Activated T-helper 2 cell treated with anti-CD3 and anti-CD28 coated beads, Interferon-gamma antibody, Interleukin-2, Interleukin-4, amounts not matched to agents 10 μg/mL and 5 μg/mL and 100 μg/mL, durations not matched to agents 14 hours and 24 hours and 36 hours (primary cell): ENCODE measurements at regions of chr12 and their contacts with region 1.

Region 1: DNA sequence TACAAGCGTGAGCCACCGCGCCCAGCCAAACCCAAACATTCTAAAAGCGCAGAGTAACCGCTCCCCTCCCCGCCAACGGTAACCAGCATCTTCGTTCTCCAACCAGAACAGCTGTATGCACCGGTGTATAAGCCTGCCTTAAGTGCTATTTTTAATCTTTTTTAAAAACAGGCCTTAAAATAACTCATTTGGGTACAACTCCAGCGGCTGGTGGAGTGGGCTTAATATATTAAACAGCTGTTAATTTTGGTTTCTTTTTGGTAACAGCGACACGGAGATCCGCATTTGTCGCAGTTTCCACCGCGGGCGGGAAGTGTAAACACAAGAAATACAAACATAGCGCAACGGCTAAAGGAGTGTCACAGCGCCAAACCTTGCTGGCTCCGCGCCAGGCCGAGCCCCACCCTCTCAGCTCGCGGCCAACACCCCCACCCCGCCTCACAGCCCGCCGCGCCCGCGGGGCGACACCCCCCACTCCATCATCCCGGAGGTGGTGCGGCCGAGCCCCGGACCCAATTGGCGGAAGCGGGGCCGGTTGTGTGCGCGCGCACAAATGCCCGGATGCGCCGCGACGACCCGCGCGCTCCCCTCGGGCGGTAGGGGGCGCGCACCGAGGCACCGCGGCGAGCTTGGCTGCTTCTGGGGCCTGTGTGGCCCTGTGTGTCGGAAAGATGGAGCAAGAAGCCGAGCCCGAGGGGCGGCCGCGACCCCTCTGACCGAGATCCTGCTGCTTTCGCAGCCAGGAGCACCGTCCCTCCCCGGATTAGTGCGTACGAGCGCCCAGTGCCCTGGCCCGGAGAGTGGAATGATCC is at the start of gene MDM2:
- DNase-seq: peak; percentile 98
- H3K4me3 Mint-ChIP-seq: peak within 1 kb of the TSS; percentile 93
- H3K27ac Mint-ChIP-seq: peak within 1 kb of the TSS; percentile 99
- H3K4me1 Mint-ChIP-seq: peaks cover 20% of the 10 kb centered on the region
- H3K27me3 Mint-ChIP-seq: no peaks in the 10 kb centered on the region
- total RNA-seq, gene MDM2: 180 and 194 TPM in 2 replicates

Region 2: GRCh38 chr12:67268896-67269631 is 1538.7 kb before region 1 on chr12 and contains the start of gene CAND1:
- intact Hi-C with region 1: loop called (anchors 2 kb)
- DNase-seq: peak; percentile 94
- H3K4me3 Mint-ChIP-seq: peak within 1 kb of the TSS; percentile 89
- H3K27ac Mint-ChIP-seq: peak within 1 kb of the TSS; percentile 99
- H3K4me1 Mint-ChIP-seq: peaks cover 31% of the 10 kb centered on the region
- H3K27me3 Mint-ChIP-seq: no peaks in the 10 kb centered on the region
- total RNA-seq, gene CAND1: 197 and 198 TPM in 2 replicates

Region 3: DNA sequence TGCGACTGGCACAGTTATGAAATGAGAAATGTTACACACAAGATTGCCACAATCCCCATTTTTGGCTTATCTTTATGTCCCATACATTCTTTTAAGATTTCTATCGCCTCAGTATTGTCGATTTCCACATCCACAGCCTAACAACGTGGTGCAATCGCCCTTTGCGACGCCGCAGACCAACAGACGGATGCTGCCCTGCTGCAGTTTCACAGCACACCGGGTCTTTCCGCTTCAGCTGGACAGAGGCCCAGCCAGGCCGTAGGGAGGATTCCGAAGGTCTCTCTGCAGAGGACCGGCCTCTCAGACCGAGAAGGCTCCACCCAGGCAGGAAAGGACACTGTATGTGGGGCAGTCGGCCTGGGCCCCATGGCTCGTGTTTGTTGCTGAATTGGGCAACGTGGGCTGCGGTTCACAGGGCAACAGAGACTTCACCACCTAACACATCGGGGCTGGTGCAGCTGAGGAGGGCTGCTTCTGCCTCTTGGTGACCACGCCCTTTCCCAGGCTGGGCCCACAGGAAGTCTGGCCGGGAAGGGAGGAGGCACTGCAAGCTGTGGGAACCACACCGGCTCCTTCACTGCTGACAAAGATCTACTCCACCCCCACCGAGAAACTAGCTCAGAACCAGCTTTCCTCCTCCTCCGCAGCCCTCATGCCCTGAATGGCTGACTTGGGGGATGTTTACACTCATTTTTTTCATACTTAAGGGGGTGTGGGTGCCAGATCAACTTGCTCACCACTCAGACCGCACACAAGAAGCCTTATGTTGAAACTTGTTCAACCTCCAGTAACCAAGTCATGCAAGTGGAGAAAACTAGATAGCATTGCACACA is 442.7 kb before region 1 on chr12:
- intact Hi-C with region 1: loop called (anchors 2 kb)
- DNase-seq: peak; percentile 85
- H3K4me3 Mint-ChIP-seq: peak overlapping the region; percentile 61
- H3K27ac Mint-ChIP-seq: peak overlapping the region; percentile 84
- H3K4me1 Mint-ChIP-seq: peaks cover 42% of the 10 kb centered on the region
- H3K27me3 Mint-ChIP-seq: no peaks in the 10 kb centered on the region

Region 4: GRCh38 chr12:68745904-68746571 is 61.7 kb before region 1 on chr12 and contains the start of gene SLC35E3:
- intact Hi-C with region 1: loop called (anchors 1 kb)
- DNase-seq: peak; percentile 91
- H3K4me3 Mint-ChIP-seq: peak within 1 kb of the TSS; percentile 92
- H3K27ac Mint-ChIP-seq: peak within 1 kb of the TSS; percentile 88
- H3K4me1 Mint-ChIP-seq: peaks cover 35% of the 10 kb centered on the region
- H3K27me3 Mint-ChIP-seq: no peaks in the 10 kb centered on the region
- total RNA-seq, gene SLC35E3: 6.3 and 9.4 TPM in 2 replicates

Region 5: GRCh38 chr12:68876461-68876860 is 68.7 kb after region 1 on chr12:
- intact Hi-C with region 1: no loop called
- DNase-seq: no peak
- H3K4me3 Mint-ChIP-seq: no peak overlapping the region
- H3K27ac Mint-ChIP-seq: peak overlapping the region; percentile 52
- H3K4me1 Mint-ChIP-seq: peaks cover 15% of the 10 kb centered on the region
- H3K27me3 Mint-ChIP-seq: no peaks in the 10 kb centered on the region

Region 6: GRCh38 chr12:68932961-68933893 is 125.4 kb after region 1 on chr12 and contains the start of gene CPM:
- intact Hi-C with region 1: loop called (anchors 5 kb)
- DNase-seq: peak; percentile 80
- H3K4me3 Mint-ChIP-seq: peak within 1 kb of the TSS; percentile 96
- H3K27ac Mint-ChIP-seq: peak within 1 kb of the TSS; percentile 84
- H3K4me1 Mint-ChIP-seq: peaks cover 29% of the 10 kb centered on the region
- H3K27me3 Mint-ChIP-seq: no peaks in the 10 kb centered on the region
- total RNA-seq, gene CPM: 48.1 and 49.7 TPM in 2 replicates

Region 7: DNA sequence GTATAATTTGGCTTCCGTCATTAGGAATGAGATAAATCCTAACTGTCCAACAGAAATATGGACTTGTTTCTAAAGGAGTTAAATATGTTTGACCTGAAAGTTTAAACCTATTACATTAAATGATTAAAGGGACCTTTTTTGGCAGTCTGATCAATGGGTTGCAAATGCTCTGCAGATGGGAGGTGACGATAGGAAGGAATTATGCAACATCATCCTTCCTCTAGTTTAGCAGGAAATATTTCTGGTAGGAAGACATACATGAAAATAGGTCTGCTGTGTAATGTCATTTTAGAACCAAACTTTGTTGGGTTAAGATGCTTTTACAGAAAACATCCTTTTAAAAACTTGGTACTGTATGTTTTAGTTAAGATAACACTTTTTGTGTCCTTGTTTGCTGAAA is 800.3 kb after region 1 on chr12:
- intact Hi-C with region 1: no loop called
- DNase-seq: no peak
- H3K4me3 Mint-ChIP-seq: no peak overlapping the region
- H3K27ac Mint-ChIP-seq: no peak overlapping the region
- H3K4me1 Mint-ChIP-seq: no peaks in the 10 kb centered on the region
- H3K27me3 Mint-ChIP-seq: peaks cover 15% of the 10 kb centered on the region